A673 (cell line): ENCODE measurements at regions of chr1 and their contacts with region 1.

Region 1: GRCh38 chr1:89780721-89781120 is 40.1 kb upstream of the LRRC8D start:
- DNase-seq: peak; percentile 75
- H3K4me3 ChIP-seq: no peak overlapping the region
- H3K27ac ChIP-seq: no peak overlapping the region
- H3K4me1 ChIP-seq: peaks cover 3% of the 10 kb centered on the region
- H3K27me3 ChIP-seq: no peaks in the 10 kb centered on the region
- CTCF ChIP-seq: peak; percentile 67

Region 2: DNA sequence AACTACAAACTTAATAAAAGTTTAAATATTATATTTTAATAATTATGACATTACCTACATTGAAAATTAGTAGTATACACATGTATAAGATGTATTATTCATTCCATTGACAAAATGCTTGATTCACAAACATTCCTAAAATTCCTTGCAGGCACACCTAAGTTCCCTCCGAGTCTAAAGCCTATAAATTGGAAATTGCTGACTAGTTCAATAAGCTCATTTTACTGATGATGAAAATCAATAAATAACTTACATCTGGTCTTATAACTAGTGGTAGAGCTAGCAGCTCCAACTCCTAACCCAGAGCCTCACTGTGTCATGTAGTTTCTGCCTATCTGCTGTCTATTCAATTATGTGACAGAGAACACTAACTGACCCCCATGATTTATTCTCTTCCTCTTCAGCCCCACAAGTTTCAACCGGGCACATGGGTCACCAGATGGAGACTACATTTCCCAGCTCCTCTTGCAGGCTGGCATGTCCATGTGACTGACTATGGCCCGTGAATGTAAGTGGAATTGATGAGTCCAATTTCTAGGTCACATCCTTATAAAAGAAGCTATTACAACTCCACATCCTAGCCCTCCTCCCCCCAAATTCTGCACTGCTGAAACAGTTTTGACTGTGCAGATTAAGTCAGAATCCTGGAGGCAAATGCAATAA is 10.5 kb after region 1 on chr1:
- CTCF ChIA-PET with region 1: no interaction called
- POLR2A ChIA-PET with region 1: interaction called, 14 read pairs
- intact Hi-C with region 1: no loop called
- DNase-seq: no peak
- H3K4me3 ChIP-seq: no peak overlapping the region
- H3K27ac ChIP-seq: no peak overlapping the region
- H3K4me1 ChIP-seq: no peaks in the 10 kb centered on the region
- H3K27me3 ChIP-seq: no peaks in the 10 kb centered on the region
- CTCF ChIP-seq: no peak

Region 3: GRCh38 chr1:89881415-89882058 is 100.8 kb after region 1 on chr1:
- CTCF ChIA-PET with region 1: no interaction called
- POLR2A ChIA-PET with region 1: no interaction called
- intact Hi-C with region 1: no loop called
- DNase-seq: no peak
- H3K4me3 ChIP-seq: no peak overlapping the region
- H3K27ac ChIP-seq: no peak overlapping the region
- H3K4me1 ChIP-seq: peaks cover 75% of the 10 kb centered on the region
- H3K27me3 ChIP-seq: no peaks in the 10 kb centered on the region
- CTCF ChIP-seq: no peak